Sciatic nerve (tissue), 2 donors: ENCODE measurements at regions of chr3 and their contacts with region 1.

Region 1: DNA sequence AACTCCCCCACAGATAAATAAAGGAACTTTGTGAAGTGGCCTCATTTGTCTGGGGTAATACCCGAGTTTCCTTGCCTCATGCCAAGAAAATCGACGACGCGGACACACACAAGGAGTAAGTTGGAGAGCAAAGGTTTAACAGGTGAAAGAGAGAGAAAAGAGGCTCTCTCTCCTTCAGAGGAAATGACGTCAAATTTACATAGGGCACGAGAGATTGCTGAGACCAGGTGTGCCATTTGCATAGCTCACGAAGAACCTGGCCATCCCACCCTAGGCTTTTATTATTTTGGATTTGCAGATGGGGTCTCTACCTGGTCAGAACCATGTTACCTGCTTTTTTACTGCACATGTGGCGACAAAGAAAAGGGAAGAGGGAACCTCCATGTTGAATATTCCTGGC is 49.3 kb upstream of the IGF2BP2 start:
- DNase-seq: no peak
- ATAC-seq: no peak

Region 2: DNA sequence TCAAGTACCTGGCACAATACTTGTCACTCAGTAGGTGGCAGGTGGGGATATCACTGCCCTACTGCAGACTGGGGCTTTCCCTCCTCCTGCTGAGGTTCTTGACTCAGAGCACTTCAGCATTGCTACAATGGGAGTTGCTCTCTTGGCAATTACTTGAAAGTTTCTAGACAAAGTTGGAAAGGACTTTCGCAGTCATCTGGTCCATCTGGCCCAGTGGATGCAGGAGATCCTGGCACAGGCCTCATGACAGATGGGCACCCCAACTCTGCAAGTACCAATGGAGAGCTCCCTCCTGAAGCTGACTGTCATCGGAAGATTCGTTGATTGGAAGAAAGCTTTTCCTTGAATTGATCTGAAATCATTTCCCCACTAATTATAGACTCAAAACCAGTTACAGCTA is 30.1 kb before region 1 on chr3:
- intact Hi-C with region 1: loop called (anchors 1 kb)
- DNase-seq: no peak
- ATAC-seq: no peak